WTC11 (cell line): ENCODE measurements at regions of chr10 and their contacts with region 1.

Region 1: DNA sequence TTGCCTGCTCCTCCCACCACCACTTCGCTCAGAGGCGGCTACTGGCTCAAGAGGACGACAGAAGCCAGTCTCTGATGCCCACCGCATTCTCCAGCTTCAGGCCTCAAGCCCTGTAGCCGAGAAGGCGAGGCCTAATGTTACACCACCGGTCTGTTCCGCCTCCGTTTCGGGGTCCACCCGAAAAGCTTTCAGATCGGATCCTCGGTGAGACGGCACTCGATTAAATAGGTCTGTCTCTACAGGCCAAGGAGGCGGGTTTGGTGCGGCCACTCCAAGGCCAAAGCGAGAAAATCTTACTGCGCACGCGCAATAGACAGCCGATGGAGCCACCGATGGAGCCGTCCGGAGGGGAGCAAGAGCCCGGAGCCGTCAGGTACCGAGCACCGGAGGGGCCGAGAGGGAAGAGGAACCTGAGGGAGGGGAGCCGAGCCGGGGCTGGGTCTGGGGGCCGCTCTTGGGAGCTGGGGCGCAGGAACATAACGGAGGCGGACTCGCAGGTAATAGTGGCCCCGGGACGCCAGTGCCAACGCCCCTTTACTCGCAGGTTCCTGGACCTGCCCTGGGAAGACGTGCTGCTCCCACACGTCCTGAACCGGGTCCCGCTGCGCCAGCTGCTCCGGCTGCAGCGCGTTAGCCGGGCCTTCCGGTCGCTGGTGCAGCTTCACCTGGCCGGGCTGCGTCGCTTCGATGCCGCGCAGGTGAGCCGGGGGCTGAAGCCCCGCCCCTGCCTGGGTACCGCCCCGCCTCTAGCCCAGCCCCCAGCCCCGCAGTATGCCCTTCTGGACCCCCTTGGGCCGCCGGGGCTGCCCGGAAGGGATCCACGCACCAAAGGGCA is at the start of gene FBXL15:
- DNase-seq: peak; percentile 98
- ATAC-seq: peak; percentile 58
- H3K4me3 Mint-ChIP-seq: peak within 1 kb of the TSS; percentile 98
- H3K27ac Mint-ChIP-seq: peak within 1 kb of the TSS; percentile 99
- H3K4me1 Mint-ChIP-seq: peaks cover 19% of the 10 kb centered on the region
- H3K27me3 Mint-ChIP-seq: peaks cover 5% of the 10 kb centered on the region; the same call in 1 of the 2 replicates
- CTCF ChIP-seq: no peak
- total RNA-seq, gene FBXL15: 21.6 to 24.6 TPM (median 23.2 TPM) in 3 replicates

Region 2: DNA sequence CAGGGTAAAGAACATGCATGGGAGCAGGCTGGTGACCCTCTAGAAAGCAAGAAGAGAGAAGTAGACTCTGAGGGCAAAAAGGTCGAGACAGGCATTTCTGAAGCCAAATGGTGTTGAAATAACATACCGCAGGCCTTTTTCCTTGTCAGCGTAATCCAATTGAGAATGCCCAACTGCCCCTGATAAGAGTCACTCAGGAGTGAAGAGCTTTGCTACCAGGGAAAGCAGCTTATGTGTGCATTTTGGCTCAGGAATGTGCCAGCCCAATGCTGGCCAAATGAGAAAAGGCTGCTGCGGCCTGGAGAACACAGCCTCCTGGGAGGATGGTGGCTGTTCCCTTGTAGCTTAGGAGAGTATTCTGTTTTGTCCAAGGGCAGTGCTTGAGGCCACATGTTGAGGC is 86.9 kb before region 1 on chr10:
- CTCF ChIA-PET with region 1: no interaction called
- POLR2A ChIA-PET with region 1: no interaction called
- DNase-seq: no peak
- ATAC-seq: no peak
- H3K4me3 Mint-ChIP-seq: no peak overlapping the region
- H3K27ac Mint-ChIP-seq: no peak overlapping the region
- H3K4me1 Mint-ChIP-seq: no peaks in the 10 kb centered on the region
- H3K27me3 Mint-ChIP-seq: peaks cover 30% of the 10 kb centered on the region
- CTCF ChIP-seq: no peak

Region 3: DNA sequence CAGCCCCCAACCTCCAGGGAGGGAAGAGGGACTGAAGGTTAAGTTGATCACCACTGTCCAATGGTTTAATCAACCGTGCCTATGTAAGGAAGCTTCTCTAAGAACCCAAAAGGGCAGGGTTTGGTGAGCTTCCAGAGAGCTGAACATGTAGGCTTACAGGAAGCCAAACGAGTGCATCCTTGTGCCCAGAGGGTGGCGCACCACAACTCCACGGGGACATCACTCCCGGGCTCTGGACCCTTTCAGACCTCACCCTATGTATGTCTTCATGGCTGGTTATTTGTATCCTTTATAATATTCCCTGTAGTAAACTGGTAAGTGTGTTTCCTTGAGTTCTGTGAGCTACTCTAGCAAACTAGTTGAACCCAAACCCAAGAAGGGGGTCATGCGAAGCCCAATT is 37.0 kb before region 1 on chr10:
- CTCF ChIA-PET with region 1: interaction called, 29 read pairs
- POLR2A ChIA-PET with region 1: no interaction called
- DNase-seq: peak; percentile 72
- ATAC-seq: peak; percentile 93
- H3K4me3 Mint-ChIP-seq: no peak overlapping the region
- H3K27ac Mint-ChIP-seq: no peak overlapping the region
- H3K4me1 Mint-ChIP-seq: no peaks in the 10 kb centered on the region
- H3K27me3 Mint-ChIP-seq: no peaks in the 10 kb centered on the region; the same call in 1 of the 2 replicates
- CTCF ChIP-seq: no peak

Region 4: DNA sequence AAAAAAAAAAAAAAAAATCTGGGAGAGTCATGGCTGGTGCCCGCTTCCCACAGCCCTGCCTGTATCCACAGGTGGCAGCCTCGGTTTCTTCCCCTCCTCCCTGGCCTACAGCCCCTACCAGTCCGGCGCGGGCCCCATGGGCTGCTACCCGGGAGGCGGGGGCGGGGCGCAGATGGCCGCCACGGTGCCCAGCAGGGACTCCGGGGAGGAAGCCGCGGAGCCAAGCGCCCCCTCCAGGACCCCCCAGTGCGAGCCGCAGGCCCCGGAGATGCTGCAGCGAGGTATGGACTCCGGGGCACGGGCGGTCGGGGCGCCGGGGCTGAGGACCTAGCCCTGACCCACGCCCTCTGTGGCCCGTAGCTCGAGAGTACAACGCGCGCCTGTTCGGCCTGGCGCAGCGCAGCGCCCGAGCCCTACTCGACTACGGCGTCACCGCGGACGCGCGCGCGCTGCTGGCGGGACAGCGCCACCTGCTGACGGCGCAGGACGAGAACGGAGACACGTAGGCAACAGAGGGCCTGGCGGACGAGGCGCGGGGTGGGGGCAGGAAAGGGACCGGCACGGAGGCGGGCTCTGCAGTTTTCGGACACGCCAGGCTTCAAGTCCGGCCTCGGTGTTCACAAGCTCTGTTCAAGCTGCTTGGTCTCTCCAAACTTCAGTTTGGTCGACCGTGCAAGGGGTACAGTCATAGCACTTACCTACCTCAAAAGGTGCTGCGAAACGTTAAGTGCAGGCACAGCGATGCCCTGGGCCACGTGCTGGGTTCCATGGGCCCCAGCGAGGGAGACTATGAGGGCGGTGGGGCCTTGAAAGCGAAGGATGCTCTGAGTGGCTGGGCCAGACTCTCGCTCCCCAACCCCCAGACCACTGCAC is 21.6 kb before region 1 on chr10:
- CTCF ChIA-PET with region 1: interaction called, 68 read pairs
- POLR2A ChIA-PET with region 1: interaction called, 12 read pairs
- DNase-seq: peak; percentile 91
- ATAC-seq: peak; percentile 67
- H3K4me3 Mint-ChIP-seq: peak overlapping the region; percentile 58
- H3K27ac Mint-ChIP-seq: no peak overlapping the region
- H3K4me1 Mint-ChIP-seq: peaks cover 13% of the 10 kb centered on the region
- H3K27me3 Mint-ChIP-seq: peaks cover 23% of the 10 kb centered on the region
- CTCF ChIP-seq: peak; percentile 92

Region 5: DNA sequence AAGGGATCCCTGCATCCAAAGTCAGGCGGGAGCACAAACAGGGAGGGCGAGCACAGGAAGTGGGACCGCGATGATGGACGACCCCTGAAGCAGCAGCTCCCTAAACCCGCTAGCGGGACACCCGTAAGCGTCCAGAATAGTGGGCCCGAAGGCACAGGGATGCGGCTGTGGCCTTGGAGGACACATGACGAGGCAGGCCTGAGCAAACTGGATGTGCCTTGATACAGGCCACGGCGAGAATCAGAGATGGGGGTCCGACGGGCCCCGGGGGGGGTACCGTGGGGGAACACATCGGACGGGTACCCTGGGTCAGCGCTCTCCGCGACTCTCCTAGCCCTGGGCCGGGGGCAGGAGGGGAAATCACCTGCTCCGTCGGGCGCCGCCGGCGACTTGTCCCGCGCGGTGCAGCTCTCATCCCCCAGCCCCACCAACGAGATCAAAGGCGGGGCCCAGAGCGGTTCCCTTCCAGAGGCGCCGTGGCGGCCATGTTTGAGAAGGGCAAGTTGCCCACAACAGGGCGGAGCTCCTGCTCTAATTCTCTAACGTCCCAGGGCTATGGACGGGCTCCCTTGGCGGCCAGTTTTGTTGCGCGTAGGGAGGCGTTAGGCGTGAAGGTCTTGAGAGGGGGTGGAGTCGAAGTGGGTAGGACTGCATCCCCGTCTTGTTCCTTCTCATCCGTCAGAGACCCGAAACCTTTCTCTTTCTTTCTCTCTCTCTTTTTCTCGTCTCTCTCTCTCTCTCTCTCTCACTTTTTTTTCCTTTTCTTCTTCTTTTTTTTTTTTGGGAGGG is 11.3 kb after region 1 on chr10 and contains the start of gene CUEDC2:
- CTCF ChIA-PET with region 1: interaction called, 47 read pairs
- POLR2A ChIA-PET with region 1: interaction called, 34 read pairs
- DNase-seq: peak; percentile 99
- ATAC-seq: peak; percentile 90
- H3K4me3 Mint-ChIP-seq: peak within 1 kb of the TSS; percentile 95
- H3K27ac Mint-ChIP-seq: peak within 1 kb of the TSS; percentile 57
- H3K4me1 Mint-ChIP-seq: peaks cover 18% of the 10 kb centered on the region
- H3K27me3 Mint-ChIP-seq: peaks cover 57% of the 10 kb centered on the region
- CTCF ChIP-seq: no peak
- total RNA-seq, gene CUEDC2: 40.2 to 69.0 TPM (median 65.8 TPM) in 3 replicates

Region 6: DNA sequence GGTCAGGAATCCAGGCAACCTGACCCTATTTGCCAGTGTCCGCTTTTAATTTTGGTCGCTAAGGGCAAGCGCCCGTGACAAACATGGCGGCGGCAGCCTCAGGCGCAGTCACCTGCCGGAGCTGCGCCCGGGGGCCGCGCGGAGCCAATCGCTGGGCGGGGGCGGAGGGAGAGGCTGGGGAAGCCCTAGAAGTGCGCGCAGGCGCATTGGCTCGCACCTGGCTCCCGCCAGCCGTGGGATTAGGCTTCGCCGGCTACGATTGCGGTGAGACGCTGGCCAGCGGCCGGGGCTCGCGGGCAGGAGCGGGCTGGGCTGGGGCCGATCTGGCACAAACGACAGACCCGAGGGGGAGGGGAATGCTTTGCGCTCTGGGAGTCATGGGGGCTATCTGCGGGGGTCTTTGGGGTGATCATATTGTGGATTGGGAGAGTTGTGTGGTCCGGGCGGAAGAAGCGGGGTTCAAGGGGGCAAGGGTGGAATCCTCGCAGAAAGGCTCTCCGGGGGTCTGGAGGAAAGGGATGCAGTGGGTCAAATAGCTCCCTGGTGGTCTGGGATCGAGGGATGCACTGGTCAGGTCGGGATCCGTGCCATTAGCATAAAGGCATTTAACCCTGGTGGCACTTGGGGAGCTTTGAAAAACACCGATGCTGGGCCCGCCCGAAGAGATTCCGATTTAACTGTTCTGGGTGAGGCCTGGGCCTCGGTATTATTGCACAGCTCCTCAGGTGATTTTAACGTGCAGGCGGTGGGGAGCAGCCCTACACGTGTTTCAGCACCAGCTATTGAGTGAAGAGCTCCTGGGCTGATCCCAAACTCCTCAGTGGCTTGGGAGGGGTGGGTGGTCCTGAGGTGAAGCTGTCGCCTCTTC is 40.4 kb after region 1 on chr10:
- CTCF ChIA-PET with region 1: interaction called, 33 read pairs
- POLR2A ChIA-PET with region 1: interaction called, 33 read pairs
- DNase-seq: peak; percentile 98
- ATAC-seq: peak; percentile 84
- H3K4me3 Mint-ChIP-seq: peak overlapping the region; percentile 97
- H3K27ac Mint-ChIP-seq: peak overlapping the region; percentile 90
- H3K4me1 Mint-ChIP-seq: peaks cover 35% of the 10 kb centered on the region
- H3K27me3 Mint-ChIP-seq: peaks cover 2% of the 10 kb centered on the region; the same call in 1 of the 2 replicates
- CTCF ChIP-seq: no peak

Region 7: DNA sequence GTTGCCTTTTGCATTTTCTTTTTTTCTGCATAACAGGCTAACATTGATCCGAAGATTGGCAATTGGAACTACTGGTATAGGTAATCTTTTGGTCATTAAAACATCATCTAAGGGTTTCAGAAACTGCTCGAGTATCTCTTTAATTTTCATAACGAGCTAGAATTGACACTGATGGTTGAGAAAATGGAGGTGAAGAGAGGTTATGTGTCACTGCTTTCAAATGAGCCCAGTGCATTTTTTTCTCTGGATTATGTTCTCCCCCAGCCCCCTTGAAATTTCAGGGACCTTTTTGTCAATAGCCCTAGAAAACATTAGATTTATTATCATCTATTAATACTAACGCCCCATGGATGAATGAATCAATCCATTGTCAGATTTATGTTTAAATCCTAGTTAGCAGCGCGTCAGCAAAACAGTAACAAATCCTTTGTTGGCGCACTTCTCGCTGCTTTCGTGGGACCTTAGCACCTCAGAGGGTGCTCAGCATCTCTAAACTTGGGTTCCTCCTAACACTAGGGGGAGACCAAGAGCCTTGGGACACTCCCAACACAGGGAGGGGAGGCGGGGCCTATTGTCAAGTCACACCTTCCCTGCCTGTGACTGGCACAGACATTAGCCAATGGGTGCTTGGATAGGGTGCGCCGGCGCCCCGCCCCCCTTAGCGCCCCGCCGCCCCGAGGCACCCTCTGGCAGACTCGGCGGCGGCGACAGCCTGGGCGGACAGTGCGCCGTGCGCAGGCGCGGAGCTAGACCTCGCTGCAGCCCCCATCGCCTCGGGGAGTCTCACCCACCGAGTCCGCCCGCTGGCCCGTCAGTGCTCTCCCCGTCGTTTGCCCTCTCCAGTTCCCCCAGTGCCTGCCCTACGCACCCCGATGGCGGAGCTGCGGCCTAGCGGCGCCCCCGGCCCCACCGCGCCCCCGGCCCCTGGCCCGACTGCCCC is 82.5 kb after region 1 on chr10 and contains the start of gene SUFU:
- CTCF ChIA-PET with region 1: interaction called, 18 read pairs
- POLR2A ChIA-PET with region 1: no interaction called
- DNase-seq: peak; percentile 98
- ATAC-seq: peak; percentile 74
- H3K4me3 Mint-ChIP-seq: peak within 1 kb of the TSS; percentile 95
- H3K27ac Mint-ChIP-seq: peak within 1 kb of the TSS; percentile 41; the same call in 1 of the 2 replicates
- H3K4me1 Mint-ChIP-seq: peaks cover 8% of the 10 kb centered on the region; the same call in 1 of the 2 replicates
- H3K27me3 Mint-ChIP-seq: peaks cover 12% of the 10 kb centered on the region
- CTCF ChIP-seq: peak; percentile 70
- total RNA-seq, gene SUFU: 11.6 to 13.1 TPM (median 12.8 TPM) in 3 replicates